ENCODE measurements at regions of chr2 and their contacts with region 1.

Region 1: GRCh38 chr2:176638167-176639015 is 369.1 kb downstream of the MTX2 start:
- DNase-seq: peak; percentile 48 to 74 (median 69)
- ATAC-seq: peak in 3 of 4 donors; percentile 79 to 95 (median 88)
- H3K4me3 ChIP-seq: peak overlapping the region; percentile 49 to 77 (median 60)
- H3K27ac ChIP-seq: peak overlapping the region in 6 of 12 donors; percentile 37 to 77 (median 58)
- H3K4me1 ChIP-seq: peaks cover 0 to 10% (median 4%) of the 10 kb centered on the region in 12 donors
- H3K27me3 ChIP-seq: peaks cover 10 to 96% (median 54%) of the 10 kb centered on the region in 9 donors
- CTCF ChIP-seq: peak; percentile 57 to 88 (median 78)
- POLR2A ChIP-seq: no peak

Region 2: GRCh38 chr2:176461809-176462382 is 176.5 kb before region 1 on chr2:
- intact Hi-C with region 1: loop called in 8 of 10 experiments (anchors 5 to 10 kb)
- DNase-seq: no peak
- ATAC-seq: no peak
- H3K4me3 ChIP-seq: no peak overlapping the region
- H3K27ac ChIP-seq: peak overlapping the region in 6 of 12 donors; percentile 7 to 26 (median 21)
- H3K4me1 ChIP-seq: peaks cover 0 to 19% (median 3%) of the 10 kb centered on the region in 12 donors
- H3K27me3 ChIP-seq: peaks cover 0 to 27% (median 8%) of the 10 kb centered on the region in 9 donors
- CTCF ChIP-seq: no peak
- POLR2A ChIP-seq: no peak

Region 3: DNA sequence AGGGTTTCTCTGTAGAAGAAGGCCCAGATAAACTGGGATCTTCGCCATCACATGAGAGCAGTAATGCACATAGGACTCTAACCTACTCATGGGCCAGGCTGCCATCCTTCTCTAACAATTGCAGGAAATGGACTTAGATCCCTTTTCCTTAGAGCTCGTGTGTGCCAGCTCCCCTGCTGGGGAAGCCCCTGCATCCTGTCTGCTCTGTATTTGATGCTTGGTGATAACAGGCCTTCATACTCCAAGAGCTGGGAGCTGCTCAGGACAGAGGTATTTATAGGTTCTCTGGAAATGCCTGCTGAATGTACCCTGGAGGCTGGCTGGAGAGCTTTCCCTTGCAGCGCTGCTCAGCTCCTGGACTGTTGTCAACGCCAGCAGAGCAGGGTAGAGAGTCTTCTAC is 119.6 kb before region 1 on chr2:
- intact Hi-C with region 1: no loop called
- DNase-seq: peak; percentile 20 to 63 (median 60)
- ATAC-seq: peak; percentile 83 to 97 (median 95)
- H3K4me3 ChIP-seq: no peak overlapping the region
- H3K27ac ChIP-seq: no peak overlapping the region
- H3K4me1 ChIP-seq: peaks cover 0 to 25% (median 9%) of the 10 kb centered on the region in 12 donors
- H3K27me3 ChIP-seq: no peaks in the 10 kb centered on the region
- CTCF ChIP-seq: no peak
- POLR2A ChIP-seq: no peak

Region 4: GRCh38 chr2:176562359-176563043 is 75.9 kb before region 1 on chr2:
- intact Hi-C with region 1: loop called in 8 of 10 experiments (anchors 5 to 10 kb)
- DNase-seq: no peak
- ATAC-seq: no peak
- H3K4me3 ChIP-seq: no peak overlapping the region
- H3K27ac ChIP-seq: no peak overlapping the region
- H3K4me1 ChIP-seq: no peaks in the 10 kb centered on the region
- H3K27me3 ChIP-seq: peaks cover 0 to 39% (median 14%) of the 10 kb centered on the region in 9 donors
- CTCF ChIP-seq: no peak
- POLR2A ChIP-seq: no peak